Common myeloid progenitor, CD34-positive (primary cell): ENCODE measurements at regions of chr15 and their contacts with region 1.

Region 1: DNA sequence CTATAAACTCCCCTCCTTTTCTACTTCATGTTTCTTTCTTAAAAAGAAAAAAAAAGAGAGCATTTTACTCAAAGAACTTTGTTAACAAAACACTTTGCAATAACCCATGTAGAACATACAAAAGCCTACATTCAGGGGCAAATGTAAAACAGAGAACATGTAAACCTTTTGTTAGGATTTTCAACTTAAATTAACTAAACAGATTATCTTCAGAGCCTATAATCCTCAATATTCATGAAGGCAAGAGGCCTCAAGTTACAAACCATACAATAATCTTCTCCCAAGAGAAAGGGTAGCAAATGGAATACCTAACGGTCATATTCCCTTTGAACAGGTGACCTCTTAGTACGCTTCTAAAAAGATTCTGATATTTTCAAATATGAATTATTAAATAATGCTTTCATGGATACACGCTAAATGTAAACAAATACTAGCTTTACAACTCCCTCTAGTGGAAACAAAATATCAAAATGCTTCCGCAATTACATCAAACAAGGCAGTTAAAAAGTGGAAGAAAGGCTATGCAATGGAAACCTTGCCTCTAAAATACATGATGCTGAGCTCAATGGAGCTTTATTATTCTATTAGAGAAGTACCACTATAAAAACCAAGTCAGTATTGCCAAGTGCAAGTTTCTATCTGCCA is 9.9 kb downstream of the CEP152 start:
- DNase-seq: peak; percentile 65 to 80 (median 76)
- H3K4me3 ChIP-seq: peak overlapping the region in 2 of 7 experiments; percentile 33 to 52
- H3K27ac ChIP-seq: peak overlapping the region; percentile 69 to 84
- H3K4me1 ChIP-seq: peaks cover 5 to 22% (median 7%) of the 10 kb centered on the region in 4 experiments
- H3K27me3 ChIP-seq: no peaks in the 10 kb centered on the region

Region 2: GRCh38 chr15:48785195-48785594 is 15.7 kb before region 1 on chr15:
- CTCF ChIA-PET with region 1: interaction called, 12 read pairs
- POLR2A ChIA-PET with region 1: no interaction called
- DNase-seq: no peak
- H3K4me3 ChIP-seq: no peak overlapping the region
- H3K27ac ChIP-seq: no peak overlapping the region
- H3K4me1 ChIP-seq: no peaks in the 10 kb centered on the region
- H3K27me3 ChIP-seq: no peaks in the 10 kb centered on the region

Region 3: DNA sequence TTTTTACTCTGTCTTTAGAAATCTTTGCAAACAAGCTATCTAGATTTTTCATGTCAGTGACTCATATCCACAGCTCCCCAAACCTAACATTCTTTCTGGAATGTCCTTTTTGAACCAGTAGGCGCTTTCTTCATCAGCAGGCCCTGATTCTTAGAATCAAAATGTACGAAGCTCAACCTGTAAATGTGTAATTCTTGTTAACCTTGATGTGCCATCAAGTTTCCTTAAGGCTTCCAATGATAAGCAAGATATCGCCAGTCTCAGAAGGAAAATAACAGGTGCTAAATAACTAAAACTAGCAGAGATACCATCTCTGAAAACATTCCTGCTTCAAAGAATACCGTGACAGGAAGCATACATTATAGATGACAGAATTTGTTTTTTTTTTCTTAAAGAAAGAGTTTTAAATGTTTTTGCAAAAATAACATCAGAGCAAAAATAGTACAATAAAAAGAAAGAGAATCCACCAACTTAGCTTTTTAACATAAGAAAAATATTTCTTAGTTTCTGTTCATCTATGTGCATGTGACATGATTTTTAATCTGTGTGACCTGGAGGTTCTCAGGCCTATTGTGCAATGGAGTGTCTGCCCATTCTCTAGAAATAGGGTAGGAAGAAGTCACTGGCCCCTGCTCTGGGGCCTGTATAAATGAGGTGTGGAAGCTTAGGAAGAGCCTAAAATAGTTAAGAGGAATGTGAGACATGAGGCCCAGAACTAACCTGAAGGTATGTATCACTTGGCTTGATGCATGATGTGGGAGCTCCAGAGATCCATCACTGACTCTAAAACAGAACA is 260.0 kb after region 1 on chr15:
- CTCF ChIA-PET with region 1: no interaction called
- POLR2A ChIA-PET with region 1: no interaction called
- DNase-seq: no peak
- H3K4me3 ChIP-seq: no peak overlapping the region
- H3K27ac ChIP-seq: no peak overlapping the region
- H3K4me1 ChIP-seq: peaks cover 0 to 14% (median 4%) of the 10 kb centered on the region in 4 experiments
- H3K27me3 ChIP-seq: no peaks in the 10 kb centered on the region